Upper lobe of right lung (tissue), 1 donor: ENCODE measurements at regions of chr11 and their contacts with region 1.

Region 1: GRCh38 chr11:19311308-19312030 is 70.7 kb upstream of the E2F8 start:
- DNase-seq: no peak
- ATAC-seq: peak; percentile 88
- H3K4me3 ChIP-seq: no peak overlapping the region
- H3K27ac ChIP-seq: no peak overlapping the region
- H3K4me1 ChIP-seq: peaks cover 3% of the 10 kb centered on the region
- H3K27me3 ChIP-seq: no peaks in the 10 kb centered on the region
- CTCF ChIP-seq: peak; percentile 80

Region 2: DNA sequence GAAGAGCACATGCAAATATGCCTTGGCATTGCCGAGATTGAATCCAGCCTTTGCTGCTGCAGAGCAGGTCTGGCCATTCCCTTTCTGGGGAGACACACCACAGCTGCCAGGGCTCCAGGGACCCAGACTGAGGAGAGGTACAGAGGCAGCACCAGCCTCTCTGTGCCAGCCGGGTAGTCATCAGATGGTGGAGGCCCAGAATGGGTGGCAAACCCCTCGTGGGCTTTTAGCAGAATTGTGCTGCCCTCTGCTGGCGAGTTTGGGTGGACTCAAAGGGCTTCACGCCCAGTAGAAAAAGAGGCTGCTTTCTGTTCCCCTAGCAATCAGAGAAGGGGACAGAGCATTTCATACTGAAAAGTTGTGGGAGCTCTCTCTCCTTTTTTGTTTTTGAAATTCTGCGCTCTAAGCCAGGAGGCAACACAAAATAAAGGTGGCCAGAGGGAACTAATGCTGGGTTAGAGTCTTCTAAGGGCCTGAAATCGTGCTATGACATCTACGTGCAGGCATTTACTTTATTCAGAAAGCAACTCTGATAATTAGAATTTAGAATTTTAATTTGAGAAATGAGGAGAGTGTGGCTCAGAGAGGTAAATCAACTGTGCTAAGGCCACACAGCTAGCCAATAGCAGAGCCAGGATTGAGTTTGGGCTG is 242.3 kb after region 1 on chr11:
- intact Hi-C with region 1: loop called (anchors 10 kb)
- DNase-seq: peak; percentile 84
- ATAC-seq: peak; percentile 79
- H3K4me3 ChIP-seq: no peak overlapping the region
- H3K27ac ChIP-seq: no peak overlapping the region
- H3K4me1 ChIP-seq: peaks cover 4% of the 10 kb centered on the region
- H3K27me3 ChIP-seq: no peaks in the 10 kb centered on the region
- CTCF ChIP-seq: peak; percentile 87

Region 3: GRCh38 chr11:20102397-20102796 is 790.9 kb after region 1 on chr11:
- intact Hi-C with region 1: loop called (anchors 5 kb)
- DNase-seq: no peak
- ATAC-seq: no peak
- H3K4me3 ChIP-seq: no peak overlapping the region
- H3K27ac ChIP-seq: no peak overlapping the region
- H3K4me1 ChIP-seq: no peaks in the 10 kb centered on the region
- H3K27me3 ChIP-seq: no peaks in the 10 kb centered on the region
- CTCF ChIP-seq: no peak